H1 (cell line): ENCODE measurements at regions of chr6 and their contacts with region 1.

Region 1: GRCh38 chr6:155327326-155328073 is 13.2 kb upstream of the TFB1M start:
- DNase-seq: peak in 1 of 2 experiments; percentile 63
- H3K4me3 ChIP-seq: no peak overlapping the region
- H3K27ac ChIP-seq: no peak overlapping the region
- H3K4me1 ChIP-seq: no peaks in the 10 kb centered on the region
- H3K27me3 ChIP-seq: no peaks in the 10 kb centered on the region
- CTCF ChIP-seq: peak in 2 of 3 experiments; percentile 65 to 70; a peak in 3 of 4 replicates
- EP300 ChIP-seq: 0 out of 3 replicates have a peak, but pooled peaks of 1 of the 2 experiments have one; percentile 7
- POLR2A ChIP-seq: no peak
- RAD21 ChIP-seq: peak; percentile 90 to 91

Region 2: DNA sequence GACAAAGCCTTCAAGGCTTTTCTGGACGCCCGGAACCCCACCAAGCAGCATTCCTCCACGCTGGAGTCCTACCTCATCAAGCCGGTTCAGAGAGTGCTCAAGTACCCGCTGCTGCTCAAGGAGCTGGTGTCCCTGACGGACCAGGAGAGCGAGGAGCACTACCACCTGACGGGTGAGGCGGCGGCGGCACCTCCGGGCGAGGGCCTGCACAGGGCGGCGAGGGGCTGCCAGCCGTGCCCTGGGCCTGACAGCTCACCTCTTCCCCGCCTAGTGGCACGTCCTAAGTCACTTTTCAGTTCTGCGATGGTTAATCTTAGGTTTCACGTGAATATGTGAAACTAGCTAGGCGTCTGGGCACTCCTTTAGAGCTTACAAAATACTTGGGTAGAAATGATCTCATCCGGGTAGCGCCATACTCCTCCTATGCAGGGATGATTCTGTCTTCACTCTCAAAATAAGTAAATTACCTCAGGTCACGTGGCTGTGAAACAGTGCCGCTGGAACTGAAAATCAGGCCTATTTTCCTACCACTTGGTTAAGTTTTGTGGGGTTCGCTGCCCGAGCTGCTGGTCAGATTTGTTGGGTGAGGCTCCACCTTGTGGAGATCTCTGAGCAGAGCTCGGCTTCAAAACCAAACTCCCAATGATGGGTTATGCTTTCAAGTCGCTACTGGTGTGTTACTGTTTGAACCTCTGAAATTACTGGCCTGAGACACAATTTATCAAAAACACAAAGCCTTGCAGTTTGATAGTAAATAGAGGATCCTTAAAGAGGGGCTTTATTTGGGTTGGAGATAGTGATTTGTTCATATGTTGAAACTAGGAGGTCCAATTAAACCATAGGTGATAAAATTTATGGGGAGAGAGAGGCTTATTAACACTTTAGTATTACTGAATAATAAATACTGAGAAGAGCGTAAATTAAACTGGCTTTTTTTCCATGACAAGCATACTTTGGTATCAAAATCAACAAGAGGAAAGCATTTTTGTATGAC is 79.2 kb before region 1 on chr6:
- CTCF ChIA-PET with region 1: no interaction called
- POLR2A ChIA-PET with region 1: no interaction called
- DNase-seq: peak in 1 of 2 experiments; percentile 67
- H3K4me3 ChIP-seq: no peak overlapping the region
- H3K27ac ChIP-seq: no peak overlapping the region
- H3K4me1 ChIP-seq: 0 out of 7 replicates have a peak, but pooled peaks cover 0 to 3% (median 0%) of the 10 kb centered on the region in 4 experiments
- H3K27me3 ChIP-seq: no peaks in the 10 kb centered on the region
- CTCF ChIP-seq: peak; percentile 71 to 91 (median 82)
- EP300 ChIP-seq: no peak
- POLR2A ChIP-seq: no peak
- RAD21 ChIP-seq: peak; percentile 86 to 90

Region 3: GRCh38 chr6:155270561-155271091 is 56.9 kb before region 1 on chr6:
- CTCF ChIA-PET with region 1: no interaction called
- POLR2A ChIA-PET with region 1: no interaction called
- DNase-seq: no peak
- H3K4me3 ChIP-seq: no peak overlapping the region
- H3K27ac ChIP-seq: no peak overlapping the region
- H3K4me1 ChIP-seq: peaks cover 2 to 6% (median 3%) of the 10 kb centered on the region in 4 experiments; a peak in 4 of 7 replicates
- H3K27me3 ChIP-seq: no peaks in the 10 kb centered on the region
- CTCF ChIP-seq: no peak
- EP300 ChIP-seq: no peak
- POLR2A ChIP-seq: no peak
- RAD21 ChIP-seq: no peak

Region 4: DNA sequence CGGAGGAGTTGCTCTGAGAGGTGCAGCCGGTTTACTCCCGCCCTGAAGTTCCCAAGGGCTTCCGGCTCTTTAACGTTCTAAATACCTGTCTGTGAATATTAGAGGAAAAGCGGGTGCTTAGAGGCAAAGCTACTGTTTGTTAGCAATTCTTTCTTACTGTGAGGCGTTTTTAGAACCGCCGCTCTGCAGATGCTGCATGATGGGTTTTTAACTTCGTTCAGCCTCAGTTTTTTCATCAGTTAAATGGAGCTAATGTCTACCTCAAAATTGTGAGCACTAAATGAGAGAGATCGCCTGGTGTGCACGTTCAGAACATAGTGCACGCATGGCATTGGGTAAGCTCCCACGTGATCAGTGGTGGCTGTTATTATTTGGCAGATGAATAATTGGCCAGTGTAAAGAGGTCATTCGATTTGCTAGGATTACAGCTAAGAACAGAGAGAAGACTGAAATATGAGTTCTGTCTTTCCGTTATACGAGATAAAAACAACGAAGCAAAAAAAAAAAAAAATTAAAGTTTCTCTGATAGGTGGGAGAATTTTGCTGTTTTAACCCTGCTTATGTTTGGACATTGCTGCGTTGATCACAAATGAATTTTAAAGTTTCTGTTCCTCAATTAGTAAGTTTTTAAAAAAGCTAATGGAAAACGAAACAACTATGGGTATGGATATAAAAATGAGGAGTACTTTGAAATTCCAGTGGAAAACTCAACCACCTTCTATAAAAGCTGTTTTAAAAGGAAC is 12.6 kb before region 1 on chr6:
- CTCF ChIA-PET with region 1: interaction called, 10 read pairs
- POLR2A ChIA-PET with region 1: interaction called, 3 read pairs
- DNase-seq: no peak
- H3K4me3 ChIP-seq: peak overlapping the region; percentile 82 to 96 (median 93)
- H3K27ac ChIP-seq: peak overlapping the region; percentile 43; the same call in 1 of the 2 replicates
- H3K4me1 ChIP-seq: no peaks in the 10 kb centered on the region
- H3K27me3 ChIP-seq: no peaks in the 10 kb centered on the region
- CTCF ChIP-seq: 0 out of 4 replicates have a peak, but pooled peaks of 1 of the 3 experiments have one; percentile 5
- EP300 ChIP-seq: no peak
- POLR2A ChIP-seq: no peak
- RAD21 ChIP-seq: no peak

Region 5: GRCh38 chr6:155340464-155341129 is 13.1 kb after region 1 on chr6:
- CTCF ChIA-PET with region 1: interaction called, 14 read pairs
- POLR2A ChIA-PET with region 1: no interaction called
- DNase-seq: no peak
- H3K4me3 ChIP-seq: no peak overlapping the region
- H3K27ac ChIP-seq: no peak overlapping the region
- H3K4me1 ChIP-seq: no peaks in the 10 kb centered on the region
- H3K27me3 ChIP-seq: no peaks in the 10 kb centered on the region
- CTCF ChIP-seq: peak in 2 of 3 experiments; percentile 71 to 72; a peak in 3 of 4 replicates
- EP300 ChIP-seq: no peak
- POLR2A ChIP-seq: no peak
- RAD21 ChIP-seq: peak; percentile 89 to 92